Panc1 (cell line): ENCODE measurements at regions of chr10 and their contacts with region 1.

Region 1: GRCh38 chr10:7525314-7526016 is 114.6 kb upstream of the SFMBT2 start:
- DNase-seq: peak; percentile 62
- ATAC-seq: peak; percentile 88
- H3K4me3 ChIP-seq: no peak overlapping the region
- H3K27ac ChIP-seq: no peak overlapping the region
- H3K4me1 ChIP-seq: no peaks in the 10 kb centered on the region
- H3K27me3 ChIP-seq: peaks cover 4% of the 10 kb centered on the region; the same call in 1 of the 2 replicates
- CTCF ChIP-seq: peak; percentile 71

Region 2: GRCh38 chr10:7146189-7146588 is 379.3 kb before region 1 on chr10:
- CTCF ChIA-PET with region 1: no interaction called
- POLR2A ChIA-PET with region 1: no interaction called
- in situ Hi-C with region 1: no loop called
- intact Hi-C with region 1: no loop called
- DNase-seq: no peak
- ATAC-seq: no peak
- H3K4me3 ChIP-seq: no peak overlapping the region
- H3K27ac ChIP-seq: no peak overlapping the region
- H3K4me1 ChIP-seq: no peaks in the 10 kb centered on the region
- H3K27me3 ChIP-seq: no peaks in the 10 kb centered on the region
- CTCF ChIP-seq: no peak

Region 3: GRCh38 chr10:7318836-7319235 is 206.6 kb before region 1 on chr10:
- CTCF ChIA-PET with region 1: no interaction called
- POLR2A ChIA-PET with region 1: no interaction called
- in situ Hi-C with region 1: no loop called
- intact Hi-C with region 1: no loop called
- DNase-seq: no peak
- ATAC-seq: no peak
- H3K4me3 ChIP-seq: no peak overlapping the region
- H3K27ac ChIP-seq: no peak overlapping the region
- H3K4me1 ChIP-seq: no peaks in the 10 kb centered on the region; the same call in 1 of the 2 replicates
- H3K27me3 ChIP-seq: no peaks in the 10 kb centered on the region
- CTCF ChIP-seq: no peak

Region 4: DNA sequence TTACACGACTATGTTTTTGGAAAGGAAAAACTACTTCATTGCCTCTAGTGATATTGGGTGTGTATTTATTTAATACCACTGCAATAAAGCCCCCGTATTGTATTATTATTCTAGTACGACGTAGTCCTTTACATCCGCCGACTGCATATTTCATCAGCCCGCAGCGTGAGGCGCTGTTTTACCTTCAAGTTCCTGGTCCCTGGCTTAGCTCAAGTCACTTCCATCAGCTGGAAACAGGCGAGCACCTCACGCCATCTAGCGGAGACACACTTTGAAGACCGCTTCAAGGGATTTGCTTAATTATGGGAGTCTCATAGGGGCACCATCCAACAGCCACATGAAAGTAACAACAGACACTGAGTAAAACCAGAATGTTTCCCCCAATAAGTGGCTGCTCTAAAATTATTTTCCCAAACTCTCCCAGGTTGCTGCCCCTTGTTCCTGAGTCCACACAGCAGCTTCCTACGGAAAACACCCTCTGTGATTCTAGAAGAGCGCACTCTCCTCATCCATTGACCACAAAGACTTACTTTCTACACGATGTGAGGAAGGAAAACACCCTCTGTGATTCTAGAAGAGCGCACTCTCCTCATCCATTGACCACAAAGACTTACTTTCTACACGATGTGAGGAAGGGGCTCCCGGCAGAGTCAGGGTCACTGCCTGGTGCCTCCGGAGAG is 161.9 kb after region 1 on chr10:
- CTCF ChIA-PET with region 1: interaction called, 32 read pairs
- POLR2A ChIA-PET with region 1: no interaction called
- in situ Hi-C with region 1: no loop called
- intact Hi-C with region 1: loop called (anchors 2 kb)
- DNase-seq: peak; percentile 69
- ATAC-seq: peak; percentile 91
- H3K4me3 ChIP-seq: no peak overlapping the region
- H3K27ac ChIP-seq: no peak overlapping the region
- H3K4me1 ChIP-seq: no peaks in the 10 kb centered on the region
- H3K27me3 ChIP-seq: no peaks in the 10 kb centered on the region
- CTCF ChIP-seq: peak; percentile 89

Region 5: DNA sequence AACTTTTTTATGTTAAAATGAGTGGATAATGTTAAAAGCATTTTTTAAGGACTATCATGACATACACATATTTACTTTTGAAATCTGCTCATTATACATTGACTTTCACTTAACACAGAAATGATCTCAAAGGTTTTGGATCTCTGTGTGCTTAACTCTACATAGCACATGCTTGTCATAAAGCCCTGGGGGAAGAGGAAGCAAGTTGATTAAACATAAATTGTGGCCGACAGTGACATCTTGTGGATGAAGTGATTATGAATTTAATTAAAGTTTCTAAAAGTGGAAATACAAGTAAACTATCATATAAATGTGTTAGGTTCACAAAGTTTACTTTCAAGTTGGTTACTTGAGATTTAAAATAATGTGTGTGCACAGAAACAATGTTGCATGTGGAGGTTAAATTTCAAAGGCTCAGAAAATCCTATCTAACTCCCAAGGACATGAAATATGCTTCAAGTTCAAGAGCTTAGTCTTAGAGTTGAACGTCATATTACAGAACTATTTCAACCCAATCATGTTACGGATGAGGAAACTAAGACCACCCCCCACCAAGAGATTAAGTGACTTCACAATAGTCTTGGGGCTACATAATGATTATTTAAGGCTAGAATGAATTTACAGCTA is 1776.8 kb after region 1 on chr10:
- CTCF ChIA-PET with region 1: no interaction called
- POLR2A ChIA-PET with region 1: no interaction called
- in situ Hi-C with region 1: no loop called
- intact Hi-C with region 1: loop called (anchors 5 kb)
- DNase-seq: peak; percentile 39
- ATAC-seq: no peak
- H3K4me3 ChIP-seq: no peak overlapping the region
- H3K27ac ChIP-seq: no peak overlapping the region
- H3K4me1 ChIP-seq: no peaks in the 10 kb centered on the region
- H3K27me3 ChIP-seq: peaks cover 3% of the 10 kb centered on the region; the same call in 1 of the 2 replicates
- CTCF ChIP-seq: peak; percentile 29; the same call in 1 of the 2 replicates